ENCODE measurements at regions of chr1 and their contacts with region 1.

Region 1: DNA sequence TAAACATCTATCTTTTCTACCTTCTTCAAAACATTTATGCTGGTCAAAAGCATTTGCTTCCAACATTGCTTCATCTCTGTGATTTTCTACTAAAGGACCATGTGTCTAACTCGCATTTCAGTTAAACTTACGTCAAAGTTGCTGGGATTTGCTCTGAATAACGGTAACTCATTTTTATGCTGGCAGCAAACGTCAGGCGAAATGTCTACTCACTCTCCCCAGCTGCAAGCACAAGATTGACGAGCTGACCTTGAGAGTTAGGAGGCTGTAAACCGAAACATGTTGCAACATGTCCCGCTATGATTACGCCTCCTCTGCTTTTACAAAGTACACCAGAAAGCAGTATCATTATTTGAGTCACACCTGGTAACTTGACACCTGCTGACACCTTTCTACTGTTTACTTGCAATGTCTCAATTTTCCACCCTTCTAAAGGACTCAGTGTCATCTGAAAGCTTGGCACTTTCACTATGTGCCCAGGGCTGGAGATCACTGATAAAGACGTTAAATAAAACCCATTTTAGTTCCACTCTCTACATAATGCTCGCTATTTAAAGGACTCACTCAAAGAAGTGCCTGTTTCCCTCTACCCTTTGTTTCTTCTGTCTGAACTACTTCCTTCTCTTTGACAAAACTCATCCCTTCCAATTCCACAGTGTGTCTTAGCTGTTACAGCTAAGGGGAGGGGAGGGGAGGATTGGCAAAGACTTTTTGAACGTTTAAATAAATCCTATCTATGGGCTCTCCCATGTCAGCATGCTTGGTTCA is 111.9 kb downstream of the PTPN14 start:
- DNase-seq: peak in 3 of 14 experiments; percentile 8 to 23 (median 22)
- ATAC-seq: peak; percentile 63
- H3K4me3 ChIP-seq: peak overlapping the region; percentile 4
- H3K4me3 Mint-ChIP-seq: peak overlapping the region; percentile 44
- H3K27ac ChIP-seq: no peak overlapping the region
- H3K27ac Mint-ChIP-seq: peak overlapping the region; percentile 19
- H3K4me1 ChIP-seq: no peaks in the 10 kb centered on the region
- H3K4me1 Mint-ChIP-seq: peaks cover 36% of the 10 kb centered on the region
- H3K27me3 ChIP-seq: no peaks in the 10 kb centered on the region
- H3K27me3 Mint-ChIP-seq: no peaks in the 10 kb centered on the region
- CTCF ChIP-seq: no peak

Region 2: GRCh38 chr1:214427871-214428277 is 11.7 kb before region 1 on chr1:
- CTCF ChIA-PET with region 1: no interaction called
- POLR2A ChIA-PET with region 1: interaction called, 14 read pairs
- intact Hi-C with region 1: no loop called
- DNase-seq: peak; percentile 7 to 86 (median 42)
- ATAC-seq: peak; percentile 97
- H3K4me3 ChIP-seq: no peak overlapping the region
- H3K4me3 Mint-ChIP-seq: peak overlapping the region; percentile 42
- H3K27ac ChIP-seq: peak overlapping the region in 1 of 2 donors; percentile 14
- H3K27ac Mint-ChIP-seq: peak overlapping the region; percentile 82
- H3K4me1 ChIP-seq: peaks cover 4% of the 10 kb centered on the region
- H3K4me1 Mint-ChIP-seq: peaks cover 35% of the 10 kb centered on the region
- H3K27me3 ChIP-seq: no peaks in the 10 kb centered on the region
- H3K27me3 Mint-ChIP-seq: no peaks in the 10 kb centered on the region
- CTCF ChIP-seq: no peak